Psoas muscle (tissue), 8 donors: ENCODE measurements at regions of chr9 and their contacts with region 1.

Region 1: GRCh38 chr9:119577881-119578280 is 208.6 kb upstream of the BRINP1 start:
- DNase-seq: no peak
- ATAC-seq: no peak
- H3K4me3 ChIP-seq: no peak overlapping the region
- H3K27ac ChIP-seq: no peak overlapping the region
- H3K4me1 ChIP-seq: no peaks in the 10 kb centered on the region
- H3K27me3 ChIP-seq: no peaks in the 10 kb centered on the region
- CTCF ChIP-seq: no peak

Region 2: DNA sequence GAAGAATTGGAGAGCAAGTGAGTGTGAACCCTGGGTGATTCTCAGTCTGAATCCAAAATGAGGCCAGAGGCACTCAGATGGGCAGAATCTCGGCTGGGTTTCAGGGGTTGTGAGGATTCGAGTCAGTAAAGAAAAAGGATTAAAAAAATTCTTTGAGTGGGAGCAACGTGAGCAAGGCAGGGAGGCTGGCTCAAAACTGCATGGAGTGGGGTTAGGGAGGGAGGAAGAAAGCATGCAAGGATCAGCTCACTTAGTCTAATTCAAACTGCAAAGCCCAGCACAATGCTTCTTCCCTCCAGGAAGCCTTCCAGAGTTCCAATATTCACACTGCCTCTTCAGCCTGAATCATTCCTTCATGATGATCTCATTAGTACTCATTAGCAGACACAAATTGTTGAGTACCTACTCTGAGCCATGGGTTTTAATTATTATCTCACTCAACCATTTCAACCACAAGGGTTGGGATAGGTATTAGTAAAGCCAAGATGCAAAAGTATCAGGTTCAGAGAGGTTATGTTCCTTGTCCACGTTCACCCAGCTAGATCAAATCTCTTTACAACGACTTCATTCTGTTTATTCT is 304.5 kb before region 1 on chr9:
- intact Hi-C with region 1: no loop called
- DNase-seq: no peak
- ATAC-seq: peak in 3 of 4 donors; percentile 37 to 40 (median 39)
- H3K4me3 ChIP-seq: no peak overlapping the region
- H3K27ac ChIP-seq: peak overlapping the region; percentile 72
- H3K4me1 ChIP-seq: peaks cover 8% of the 10 kb centered on the region
- H3K27me3 ChIP-seq: no peaks in the 10 kb centered on the region
- CTCF ChIP-seq: no peak

Region 3: DNA sequence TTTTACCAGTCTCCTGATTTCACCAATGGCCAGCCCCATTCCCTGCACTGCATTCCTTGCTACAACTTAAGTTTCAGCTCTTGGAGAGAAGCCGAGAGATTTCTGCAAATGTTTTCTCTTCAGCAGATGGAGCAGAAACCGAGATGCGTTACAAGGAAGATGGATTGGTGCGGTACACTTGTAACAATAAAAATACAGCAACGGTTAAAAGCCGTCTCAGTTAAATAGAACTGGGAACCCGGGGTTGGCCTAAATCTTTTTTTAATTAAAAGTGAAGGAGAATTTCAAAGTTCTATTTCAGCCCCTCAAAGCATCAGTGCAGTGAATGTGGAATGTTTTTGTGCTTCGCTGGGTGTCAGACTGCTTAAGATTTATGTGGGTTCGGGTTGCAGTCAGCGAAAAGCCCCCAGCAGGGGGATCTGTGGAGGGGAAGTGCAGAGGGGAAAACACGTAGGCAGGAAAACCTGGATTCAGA is 228.5 kb before region 1 on chr9:
- intact Hi-C with region 1: no loop called
- DNase-seq: no peak
- ATAC-seq: no peak
- H3K4me3 ChIP-seq: no peak overlapping the region
- H3K27ac ChIP-seq: no peak overlapping the region
- H3K4me1 ChIP-seq: no peaks in the 10 kb centered on the region
- H3K27me3 ChIP-seq: peaks cover 0 to 4% (median 0%) of the 10 kb centered on the region in 3 donors
- CTCF ChIP-seq: no peak

Region 4: DNA sequence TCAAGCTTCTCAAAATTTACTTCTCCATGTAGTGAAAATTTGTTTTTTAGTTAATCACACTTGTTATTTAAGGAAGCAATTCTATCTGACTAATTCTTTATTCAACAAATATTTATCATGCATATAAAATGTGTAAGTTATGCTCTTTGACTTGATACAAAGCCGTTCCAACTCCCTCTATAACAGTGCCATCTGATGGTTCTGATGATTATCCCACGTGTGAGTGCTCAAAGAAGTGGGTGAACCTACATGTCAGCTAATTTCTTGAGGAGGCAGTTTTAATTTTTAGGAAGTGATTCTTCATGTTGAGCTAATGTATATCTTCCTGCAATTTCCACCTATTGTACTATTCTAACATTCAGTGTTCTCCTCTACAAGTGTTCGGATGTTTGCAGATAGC is 119.8 kb before region 1 on chr9:
- intact Hi-C with region 1: no loop called
- DNase-seq: no peak
- ATAC-seq: no peak
- H3K4me3 ChIP-seq: no peak overlapping the region
- H3K27ac ChIP-seq: no peak overlapping the region
- H3K4me1 ChIP-seq: no peaks in the 10 kb centered on the region
- H3K27me3 ChIP-seq: no peaks in the 10 kb centered on the region
- CTCF ChIP-seq: no peak

Region 5: GRCh38 chr9:119509291-119509905 is 68.5 kb before region 1 on chr9:
- intact Hi-C with region 1: loop called in 1 of 2 experiments (anchors 10 kb)
- DNase-seq: no peak
- ATAC-seq: no peak
- H3K4me3 ChIP-seq: no peak overlapping the region
- H3K27ac ChIP-seq: no peak overlapping the region
- H3K4me1 ChIP-seq: no peaks in the 10 kb centered on the region
- H3K27me3 ChIP-seq: no peaks in the 10 kb centered on the region
- CTCF ChIP-seq: no peak